Activated CD4-positive, alpha-beta T cell treated with anti-CD3 and anti-CD28 coated beads, Interleukin-2, amount 10 ng/mL, durations not matched to agents 24 days and 14 days (primary cell): ENCODE measurements at regions of chr6 and their contacts with region 1.

Region 1: DNA sequence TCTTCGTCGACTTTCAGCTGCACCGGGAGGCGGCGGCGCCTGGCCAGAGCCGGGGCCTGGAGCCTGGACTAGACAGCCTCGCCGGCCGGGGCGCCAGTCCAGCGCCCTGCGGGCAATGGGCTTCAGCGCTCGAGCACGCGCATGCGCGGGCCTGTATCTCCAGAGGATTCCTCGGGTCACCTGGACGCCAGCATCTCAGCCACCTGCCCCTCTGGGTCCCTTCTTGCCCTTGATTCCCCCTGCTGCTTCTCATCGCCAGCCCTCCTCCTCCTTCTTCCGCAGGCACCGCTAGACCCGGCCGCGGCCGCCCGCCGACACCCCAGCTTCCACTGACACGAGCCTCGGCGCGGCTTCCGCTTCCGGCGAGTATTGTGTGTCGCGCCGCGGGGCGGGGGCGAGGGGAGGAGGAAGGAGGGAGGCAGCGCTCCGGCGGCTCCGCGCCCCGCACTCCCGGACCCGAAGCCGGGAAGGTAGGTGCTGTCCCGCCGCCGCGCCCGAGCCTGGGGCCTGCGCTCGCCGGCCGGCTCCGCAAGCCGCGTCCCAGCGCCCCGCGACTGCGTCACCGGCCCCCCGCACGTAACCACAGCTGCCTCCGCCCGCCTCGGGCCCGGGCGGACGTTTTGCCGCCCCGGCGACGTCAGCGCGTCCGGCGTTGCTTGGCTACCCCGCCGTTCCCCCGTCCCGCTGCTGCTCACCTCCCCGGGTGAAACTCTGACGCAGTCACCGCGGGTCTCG is at the start of gene TRIM39:
- DNase-seq: peak; percentile 97
- H3K4me3 Mint-ChIP-seq: peak within 1 kb of the TSS; percentile 96
- H3K27ac Mint-ChIP-seq: peak within 1 kb of the TSS; percentile 99
- H3K4me1 Mint-ChIP-seq: peaks cover 49% of the 10 kb centered on the region
- H3K27me3 Mint-ChIP-seq: no peaks in the 10 kb centered on the region
- total RNA-seq, gene TRIM39: 12.5 and 13.7 TPM in 2 replicates

Region 2: DNA sequence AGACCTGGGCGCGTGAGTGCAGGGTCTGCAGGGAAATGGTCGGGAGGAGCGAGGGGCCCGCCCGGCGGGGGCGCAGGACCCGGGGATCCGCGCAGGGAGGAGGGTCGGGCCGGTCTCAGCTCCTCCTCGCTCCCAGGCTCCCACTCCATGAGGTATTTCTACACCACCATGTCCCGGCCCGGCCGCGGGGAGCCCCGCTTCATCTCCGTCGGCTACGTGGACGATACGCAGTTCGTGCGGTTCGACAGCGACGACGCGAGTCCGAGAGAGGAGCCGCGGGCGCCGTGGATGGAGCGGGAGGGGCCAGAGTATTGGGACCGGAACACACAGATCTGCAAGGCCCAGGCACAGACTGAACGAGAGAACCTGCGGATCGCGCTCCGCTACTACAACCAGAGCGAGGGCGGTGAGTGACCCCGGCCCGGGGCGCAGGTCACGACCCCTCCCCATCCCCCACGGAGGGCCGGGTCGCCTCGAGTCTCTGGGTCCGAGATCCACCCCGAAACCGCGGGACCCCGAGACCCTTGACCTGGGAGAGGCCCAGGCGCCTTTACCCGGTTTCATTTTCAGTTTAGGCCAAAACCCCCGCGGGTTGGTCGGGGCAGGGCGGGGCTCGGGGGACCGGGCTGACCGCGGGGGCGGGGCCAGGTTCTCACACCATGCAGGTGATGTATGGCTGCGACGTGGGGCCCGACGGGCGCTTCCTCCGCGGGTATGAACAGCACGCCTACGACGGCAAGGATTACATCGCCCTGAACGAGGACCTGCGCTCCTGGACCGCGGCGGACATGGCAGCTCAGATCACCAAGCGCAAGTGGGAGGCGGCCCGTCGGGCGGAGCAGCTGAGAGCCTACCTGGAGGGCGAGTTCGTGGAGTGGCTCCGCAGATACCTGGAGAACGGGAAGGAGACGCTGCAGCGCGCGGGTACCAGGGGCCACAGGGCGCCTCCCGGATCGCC is 438.6 kb before region 1 on chr6:
- intact Hi-C with region 1: no loop called
- DNase-seq: peak; percentile 95
- H3K4me3 Mint-ChIP-seq: peak overlapping the region; percentile 92
- H3K27ac Mint-ChIP-seq: peak overlapping the region; percentile 89
- H3K4me1 Mint-ChIP-seq: peaks cover 15% of the 10 kb centered on the region
- H3K27me3 Mint-ChIP-seq: peaks cover 25% of the 10 kb centered on the region

Region 3: GRCh38 chr6:30066577-30067459 is 259.9 kb before region 1 on chr6 and contains the start of gene PPP1R11:
- intact Hi-C with region 1: loop called (anchors 5 kb)
- DNase-seq: peak; percentile 99
- H3K4me3 Mint-ChIP-seq: peak within 1 kb of the TSS; percentile 93
- H3K27ac Mint-ChIP-seq: peak within 1 kb of the TSS; percentile 99
- H3K4me1 Mint-ChIP-seq: peaks cover 45% of the 10 kb centered on the region
- H3K27me3 Mint-ChIP-seq: peaks cover 16% of the 10 kb centered on the region
- total RNA-seq, gene PPP1R11: 60.9 and 61.1 TPM in 2 replicates

Region 4: GRCh38 chr6:30212865-30213666 is 113.6 kb before region 1 on chr6 and contains the start of gene TRIM26:
- intact Hi-C with region 1: loop called (anchors 1 kb)
- DNase-seq: peak; percentile 100
- H3K4me3 Mint-ChIP-seq: peak within 1 kb of the TSS; percentile 96
- H3K27ac Mint-ChIP-seq: peak within 1 kb of the TSS; percentile 98
- H3K4me1 Mint-ChIP-seq: peaks cover 47% of the 10 kb centered on the region
- H3K27me3 Mint-ChIP-seq: peaks cover 2% of the 10 kb centered on the region
- total RNA-seq, gene TRIM26: 58.3 and 60.1 TPM in 2 replicates

Region 5: DNA sequence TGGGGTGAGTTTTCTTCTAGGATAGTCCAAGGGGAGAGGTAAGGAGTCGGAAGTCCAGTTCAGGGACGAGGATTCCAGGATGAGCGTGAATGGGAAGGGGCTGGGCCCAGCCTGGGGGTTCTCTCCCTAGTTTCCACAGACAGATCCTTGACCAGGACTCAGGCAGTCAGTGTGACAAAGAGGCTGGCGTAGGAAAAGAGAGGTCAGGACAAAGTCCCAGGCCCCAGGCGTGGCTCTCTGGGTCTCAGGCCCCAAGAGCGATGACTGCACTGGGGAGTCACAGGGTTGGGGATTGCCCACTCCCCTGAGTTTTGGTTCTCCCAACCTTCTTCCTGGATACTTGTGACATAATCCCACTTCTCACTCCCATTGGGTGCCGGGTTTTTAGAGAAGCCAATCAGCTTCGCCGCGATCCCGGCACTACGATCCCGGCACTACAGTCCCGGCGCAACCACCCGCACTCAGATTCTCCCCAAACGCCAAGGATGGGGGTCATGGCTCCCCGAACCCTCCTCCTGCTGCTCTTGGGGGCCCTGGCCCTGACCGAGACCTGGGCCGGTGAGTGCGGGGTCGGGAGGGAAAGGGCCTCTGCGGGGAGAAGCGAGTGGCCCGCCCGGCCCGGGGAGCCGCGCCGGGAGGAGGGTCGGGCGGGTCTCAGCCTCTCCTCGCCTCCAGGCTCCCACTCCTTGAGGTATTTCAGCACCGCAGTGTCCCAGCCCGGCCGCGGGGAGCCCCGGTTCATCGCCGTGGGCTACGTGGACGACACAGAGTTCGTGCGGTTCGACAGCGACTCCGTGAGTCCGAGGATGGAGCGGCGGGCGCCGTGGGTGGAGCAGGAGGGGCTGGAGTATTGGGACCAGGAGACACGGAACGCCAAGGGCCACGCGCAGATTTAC is 67.3 kb before region 1 on chr6:
- intact Hi-C with region 1: loop called (anchors 1 kb)
- DNase-seq: peak; percentile 90
- H3K4me3 Mint-ChIP-seq: peak overlapping the region; percentile 85
- H3K27ac Mint-ChIP-seq: peak overlapping the region; percentile 73
- H3K4me1 Mint-ChIP-seq: peaks cover 13% of the 10 kb centered on the region
- H3K27me3 Mint-ChIP-seq: peaks cover 26% of the 10 kb centered on the region

Region 6: DNA sequence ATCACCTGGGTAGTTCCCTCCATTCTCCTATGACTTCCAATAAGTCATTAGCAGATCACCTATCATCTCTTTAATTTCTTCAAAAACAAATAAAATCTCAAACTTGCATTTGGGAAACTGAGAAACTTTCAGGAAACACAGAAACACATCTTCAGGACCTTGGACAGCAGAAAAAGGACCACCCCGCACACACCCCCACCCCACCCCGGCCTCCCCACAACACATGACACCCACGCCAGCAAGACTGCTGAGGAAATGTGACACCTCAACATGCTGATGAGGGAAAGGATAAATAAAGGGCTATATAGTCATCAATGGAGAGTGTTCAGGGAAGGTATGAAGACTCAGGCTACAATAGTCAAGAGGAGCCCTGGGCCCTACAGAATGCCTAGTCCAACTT is 15.6 kb before region 1 on chr6:
- intact Hi-C with region 1: no loop called
- DNase-seq: no peak
- H3K4me3 Mint-ChIP-seq: no peak overlapping the region
- H3K27ac Mint-ChIP-seq: no peak overlapping the region
- H3K4me1 Mint-ChIP-seq: peaks cover 18% of the 10 kb centered on the region
- H3K27me3 Mint-ChIP-seq: no peaks in the 10 kb centered on the region

Region 7: DNA sequence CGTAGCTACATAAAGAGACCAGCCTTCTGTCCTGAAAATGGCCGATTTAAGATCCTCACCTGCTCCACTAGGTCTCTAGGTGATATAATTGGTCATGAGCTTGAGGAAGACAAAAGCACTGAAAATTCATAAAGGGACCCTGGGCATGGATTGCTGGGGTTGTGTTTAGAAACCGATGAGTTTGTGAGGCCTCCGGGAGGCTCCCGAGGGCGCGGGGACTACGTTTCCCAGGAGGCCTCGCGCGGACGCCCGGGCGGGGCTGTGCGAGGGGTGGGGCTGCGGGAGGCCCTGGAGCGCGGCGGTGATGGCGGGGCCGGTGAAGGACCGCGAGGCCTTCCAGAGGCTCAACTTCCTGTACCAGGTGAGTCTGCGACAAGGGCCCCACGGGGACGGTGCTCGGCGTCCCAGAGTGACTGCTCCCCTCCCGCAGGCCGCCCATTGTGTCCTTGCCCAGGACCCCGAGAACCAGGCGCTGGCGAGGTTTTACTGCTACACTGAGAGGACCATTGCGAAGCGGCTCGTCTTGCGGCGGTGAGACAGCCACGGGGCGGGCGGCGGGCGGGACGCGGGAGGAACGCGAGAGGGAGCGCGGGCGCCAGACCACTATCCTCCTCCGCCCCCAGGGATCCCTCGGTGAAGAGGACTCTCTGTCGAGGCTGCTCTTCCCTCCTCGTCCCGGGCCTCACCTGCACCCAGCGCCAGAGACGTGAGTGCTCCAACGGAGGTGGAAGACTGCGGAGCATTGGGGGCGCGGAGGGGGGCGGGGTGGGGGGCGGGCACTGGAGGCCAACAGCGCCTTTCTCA is 18.4 kb after region 1 on chr6 and contains the start of gene RPP21:
- intact Hi-C with region 1: loop called (anchors 1 kb)
- DNase-seq: peak; percentile 97
- H3K4me3 Mint-ChIP-seq: peak within 1 kb of the TSS; percentile 90
- H3K27ac Mint-ChIP-seq: peak within 1 kb of the TSS; percentile 89
- H3K4me1 Mint-ChIP-seq: peaks cover 17% of the 10 kb centered on the region
- H3K27me3 Mint-ChIP-seq: peaks cover 5% of the 10 kb centered on the region
- total RNA-seq, gene RPP21: 45.0 and 48.0 TPM in 2 replicates